Dorsolateral prefrontal cortex (tissue), 120 donors: ENCODE measurements at regions of chr10 and their contacts with region 1.

Region 1: GRCh38 chr10:49518982-49519578 is 19.8 kb downstream of the ERCC6 start:
- DNase-seq: peak in 3 of 10 donors; percentile 20 to 40 (median 31)
- H3K4me3 ChIP-seq: no peak overlapping the region
- H3K27ac ChIP-seq: peak overlapping the region in 1 of 59 donors; percentile 21
- H3K27me3 ChIP-seq: no peaks in the 10 kb centered on the region
- CTCF ChIP-seq: peak; percentile 45 to 88 (median 74)

Region 2: DNA sequence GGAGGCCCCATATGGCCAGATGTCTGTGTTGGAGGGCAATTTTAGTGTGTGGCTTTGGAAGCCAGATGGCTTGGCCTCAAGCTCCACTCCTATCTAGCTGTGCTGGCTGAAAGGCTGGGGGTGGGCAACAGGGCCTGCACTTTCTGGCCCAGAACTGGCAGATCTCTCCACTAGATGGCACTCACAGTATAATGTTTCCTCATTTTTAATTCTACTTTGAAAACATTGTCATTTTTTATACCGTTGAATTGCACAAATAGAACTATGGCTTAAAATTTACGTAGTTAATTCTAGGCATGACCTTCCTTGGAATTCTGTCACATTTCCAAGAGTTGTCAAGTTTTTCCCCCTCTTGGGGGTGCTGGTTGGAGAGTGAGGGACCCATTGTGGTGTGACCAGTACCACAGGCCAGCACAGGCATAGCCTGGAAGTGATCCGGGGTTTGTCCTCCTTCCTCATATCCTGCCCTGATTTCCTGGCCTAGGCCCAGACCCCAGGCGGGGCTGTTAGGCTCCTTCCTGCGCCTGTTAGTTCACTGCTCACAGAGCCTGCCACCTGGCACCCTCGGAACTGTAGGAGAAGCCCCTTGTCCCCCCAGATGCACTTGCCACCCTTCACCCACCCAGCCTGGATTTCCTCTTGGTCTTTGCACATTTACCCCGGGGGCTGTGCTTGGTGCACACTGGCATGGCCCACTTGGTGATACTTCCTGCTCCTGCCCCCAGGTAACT is 967.1 kb before region 1 on chr10:
- intact Hi-C with region 1: loop called in 1 of 2 experiments (anchors 10 kb)
- DNase-seq: peak in 4 of 10 donors; percentile 41 to 63 (median 50)
- H3K4me3 ChIP-seq: no peak overlapping the region
- H3K27ac ChIP-seq: peak overlapping the region in 37 of 59 donors; percentile 0 to 77 (median 37)
- H3K27me3 ChIP-seq: no peaks in the 10 kb centered on the region
- CTCF ChIP-seq: peak; percentile 65 to 97 (median 88)

Region 3: DNA sequence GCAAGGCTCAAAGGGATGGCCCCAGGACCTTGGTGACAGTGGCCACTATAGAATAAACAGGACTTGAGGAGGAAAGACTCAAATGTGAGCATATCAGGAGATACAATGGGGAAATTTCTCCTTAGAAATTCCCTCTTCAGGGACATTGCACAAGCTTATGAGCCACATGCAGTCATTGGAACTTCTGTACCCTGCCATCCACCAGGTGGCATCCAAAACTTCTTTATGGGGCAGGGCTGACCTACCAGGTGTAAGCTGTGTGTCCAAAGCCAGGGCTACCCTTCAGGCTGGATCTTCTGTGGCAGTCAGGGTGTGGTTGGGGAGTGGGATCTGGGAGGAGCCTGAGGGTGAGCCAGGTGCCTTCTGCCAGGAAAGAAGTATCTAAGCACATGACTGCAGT is 542.9 kb before region 1 on chr10:
- intact Hi-C with region 1: loop called (anchors 10 kb)
- DNase-seq: peak in 1 of 10 donors; percentile 16
- H3K4me3 ChIP-seq: no peak overlapping the region
- H3K27ac ChIP-seq: no peak overlapping the region
- H3K27me3 ChIP-seq: no peaks in the 10 kb centered on the region
- CTCF ChIP-seq: peak in 35 of 56 donors; percentile 9 to 51 (median 26)

Region 4: GRCh38 chr10:48981310-48981907 is 537.7 kb before region 1 on chr10:
- intact Hi-C with region 1: loop called (anchors 10 kb)
- DNase-seq: peak in 6 of 10 donors; percentile 20 to 68 (median 48)
- H3K4me3 ChIP-seq: no peak overlapping the region
- H3K27ac ChIP-seq: no peak overlapping the region
- H3K27me3 ChIP-seq: no peaks in the 10 kb centered on the region
- CTCF ChIP-seq: peak; percentile 41 to 91 (median 80)

Region 5: DNA sequence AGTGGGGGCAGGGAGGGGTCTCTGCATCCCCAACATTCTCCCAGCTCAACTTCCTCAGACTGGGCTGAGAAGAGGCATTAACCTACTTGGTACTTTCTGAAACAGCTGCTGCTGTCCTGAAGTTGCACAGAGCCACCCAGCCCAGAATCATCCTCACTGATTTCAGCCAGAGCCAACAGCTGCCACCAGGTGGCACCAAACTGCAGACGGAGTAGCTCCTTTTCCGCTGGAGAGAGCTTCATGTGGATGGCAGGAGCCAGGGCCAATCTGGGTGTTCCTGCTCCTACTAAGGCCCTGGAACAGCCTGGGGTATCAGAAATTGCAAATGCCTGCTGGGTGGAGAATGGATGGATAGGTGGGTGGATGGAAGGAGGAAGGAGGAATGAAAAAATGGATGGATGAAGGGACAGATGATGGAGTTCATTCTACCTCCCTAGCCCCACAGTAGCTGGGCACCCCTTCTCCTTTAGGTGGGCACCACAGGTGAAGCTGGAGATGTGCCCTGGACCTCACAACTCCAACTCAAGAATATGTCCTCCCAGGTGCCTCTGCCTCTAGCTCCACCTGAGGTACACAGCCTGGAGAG is 111.4 kb before region 1 on chr10:
- intact Hi-C with region 1: loop called (anchors 5 kb)
- DNase-seq: peak; percentile 70 to 88 (median 78)
- H3K4me3 ChIP-seq: no peak overlapping the region
- H3K27ac ChIP-seq: no peak overlapping the region
- H3K27me3 ChIP-seq: peaks cover 0 to 47% (median 11%) of the 10 kb centered on the region in 45 donors
- CTCF ChIP-seq: peak; percentile 63 to 92 (median 86)

Region 6: DNA sequence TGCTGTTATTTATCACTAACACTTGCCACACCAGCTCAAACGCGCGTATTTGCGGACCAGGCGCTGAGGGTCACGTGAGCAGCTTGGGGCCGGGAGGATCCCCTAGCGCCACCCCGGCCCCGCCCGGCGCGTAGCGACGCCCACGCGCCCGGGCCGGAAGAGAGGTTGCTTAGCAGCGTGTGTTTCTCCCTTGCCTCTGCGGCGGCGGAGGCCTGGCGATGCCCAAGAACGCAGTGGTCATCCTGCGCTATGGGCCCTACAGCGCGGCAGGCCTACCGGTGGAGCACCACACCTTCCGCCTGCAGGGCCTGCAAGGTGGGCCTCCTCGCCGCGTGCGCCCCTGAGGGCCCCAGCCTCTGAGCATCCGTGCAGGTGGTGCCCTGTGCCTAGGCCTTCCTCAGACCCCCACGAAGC is 160.4 kb after region 1 on chr10 and contains the start of gene C10orf53:
- intact Hi-C with region 1: no loop called
- DNase-seq: peak in 9 of 10 donors; percentile 22 to 73 (median 55)
- H3K4me3 ChIP-seq: peak within 1 kb of the TSS; percentile 11 to 65 (median 45)
- H3K27ac ChIP-seq: peak within 1 kb of the TSS in 1 of 59 donors; percentile 10
- H3K27me3 ChIP-seq: peaks cover 0 to 48% (median 4%) of the 10 kb centered on the region in 45 donors
- CTCF ChIP-seq: no peak
- total RNA-seq, gene C10orf53: 0.16 to 0.73 (median 0.24) TPM in 10 of 120 experiments, not detected in the others